ENCODE measurements at regions of chr1 and their contacts with region 1.

Region 1: GRCh38 chr1:18765725-18766124 is 93.7 kb downstream of the TAS1R2 start:
- DNase-seq: no peak
- H3K4me3 ChIP-seq: no peak overlapping the region
- H3K27ac ChIP-seq: no peak overlapping the region
- H3K27me3 ChIP-seq: peaks cover 0 to 68% (median 7%) of the 10 kb centered on the region in 45 donors
- CTCF ChIP-seq: no peak

Region 2: GRCh38 chr1:18748435-18748834 is 17.3 kb before region 1 on chr1:
- intact Hi-C with region 1: loop called in 1 of 2 experiments (anchors 2 kb)
- DNase-seq: no peak
- H3K4me3 ChIP-seq: no peak overlapping the region
- H3K27ac ChIP-seq: no peak overlapping the region
- H3K27me3 ChIP-seq: peaks cover 0 to 84% (median 40%) of the 10 kb centered on the region in 45 donors
- CTCF ChIP-seq: no peak

Region 3: GRCh38 chr1:18875107-18875795 is 109.5 kb after region 1 on chr1:
- intact Hi-C with region 1: no loop called
- DNase-seq: peak; percentile 75 to 92 (median 86)
- H3K4me3 ChIP-seq: no peak overlapping the region
- H3K27ac ChIP-seq: no peak overlapping the region
- H3K27me3 ChIP-seq: no peaks in the 10 kb centered on the region
- CTCF ChIP-seq: peak; percentile 58 to 91 (median 85)

Measured in dorsolateral prefrontal cortex (tissue), 120 donors.